Mammary epithelial cell (primary cell): ENCODE measurements at regions of chr2 and their contacts with region 1.

Region 1: DNA sequence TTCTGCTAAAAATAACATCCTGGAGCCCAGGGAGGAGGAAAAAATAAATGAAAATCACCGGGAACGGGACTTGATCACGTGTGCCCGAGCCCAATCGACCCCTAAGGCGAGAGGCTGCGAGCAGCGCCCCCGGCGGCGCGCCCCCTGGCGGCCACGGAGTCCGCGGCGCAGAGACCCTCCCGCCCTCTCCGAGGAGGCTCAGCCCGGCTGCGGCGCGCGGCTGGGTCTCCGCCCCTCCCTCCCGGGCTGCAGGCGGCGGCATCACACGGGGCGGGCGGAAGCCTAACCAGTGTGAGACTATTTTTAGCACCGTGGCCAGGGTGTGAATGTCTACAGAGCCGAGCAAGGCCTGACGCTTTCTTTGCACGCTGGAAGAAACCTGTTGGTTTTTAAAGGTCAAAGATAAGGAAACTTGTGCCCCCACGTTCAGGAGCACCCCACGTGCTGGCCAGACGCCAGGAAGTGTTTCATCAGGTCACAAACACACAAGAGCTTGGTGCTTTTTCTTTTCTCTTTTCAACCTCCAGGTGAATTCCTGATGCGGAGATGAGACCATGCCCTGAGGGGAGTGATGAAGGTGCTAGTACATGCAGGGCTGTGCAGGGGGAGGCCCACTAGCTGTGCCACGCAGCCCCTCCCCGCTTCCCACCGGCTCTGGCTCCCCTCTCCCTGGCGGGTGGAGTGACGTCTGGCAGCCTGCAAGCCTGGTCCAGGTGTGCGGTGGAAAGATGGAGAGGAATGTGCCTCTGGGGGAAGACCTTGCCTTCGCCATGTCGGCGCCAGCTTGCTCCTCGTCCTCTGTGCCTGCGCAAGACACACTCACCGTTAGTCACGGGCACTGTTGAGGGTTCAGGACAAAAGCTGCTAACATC is 35.3 kb upstream of the DNMT3A start:
- DNase-seq: peak; percentile 86
- H3K4me3 ChIP-seq: peak overlapping the region in 2 of 3 experiments; percentile 29 to 38
- H3K27ac ChIP-seq: peak overlapping the region; percentile 49
- H3K4me1 ChIP-seq: peaks cover 38% of the 10 kb centered on the region
- H3K27me3 ChIP-seq: no peaks in the 10 kb centered on the region
- CTCF ChIP-seq: peak; percentile 65 to 73

Region 2: GRCh38 chr2:25342372-25343186 is 34.4 kb before region 1 on chr2:
- CTCF ChIA-PET with region 1: no interaction called
- dilution Hi-C with region 1: no loop called
- in situ Hi-C with region 1: no loop called
- intact Hi-C with region 1: loop called (anchors 1 kb)
- DNase-seq: peak; percentile 65
- H3K4me3 ChIP-seq: peak overlapping the region; percentile 61 to 62 (median 62)
- H3K27ac ChIP-seq: no peak overlapping the region
- H3K4me1 ChIP-seq: peaks cover 15% of the 10 kb centered on the region
- H3K27me3 ChIP-seq: no peaks in the 10 kb centered on the region
- CTCF ChIP-seq: peak; percentile 71 to 92

Region 3: GRCh38 chr2:25362049-25362433 is 14.9 kb before region 1 on chr2:
- CTCF ChIA-PET with region 1: interaction called, 10 read pairs
- dilution Hi-C with region 1: no loop called
- in situ Hi-C with region 1: no loop called
- intact Hi-C with region 1: loop called (anchors 1 kb)
- DNase-seq: peak; percentile 77
- H3K4me3 ChIP-seq: peak overlapping the region; percentile 11 to 38 (median 15)
- H3K27ac ChIP-seq: no peak overlapping the region
- H3K4me1 ChIP-seq: peaks cover 18% of the 10 kb centered on the region
- H3K27me3 ChIP-seq: no peaks in the 10 kb centered on the region
- CTCF ChIP-seq: peak; percentile 90 to 91

Region 4: DNA sequence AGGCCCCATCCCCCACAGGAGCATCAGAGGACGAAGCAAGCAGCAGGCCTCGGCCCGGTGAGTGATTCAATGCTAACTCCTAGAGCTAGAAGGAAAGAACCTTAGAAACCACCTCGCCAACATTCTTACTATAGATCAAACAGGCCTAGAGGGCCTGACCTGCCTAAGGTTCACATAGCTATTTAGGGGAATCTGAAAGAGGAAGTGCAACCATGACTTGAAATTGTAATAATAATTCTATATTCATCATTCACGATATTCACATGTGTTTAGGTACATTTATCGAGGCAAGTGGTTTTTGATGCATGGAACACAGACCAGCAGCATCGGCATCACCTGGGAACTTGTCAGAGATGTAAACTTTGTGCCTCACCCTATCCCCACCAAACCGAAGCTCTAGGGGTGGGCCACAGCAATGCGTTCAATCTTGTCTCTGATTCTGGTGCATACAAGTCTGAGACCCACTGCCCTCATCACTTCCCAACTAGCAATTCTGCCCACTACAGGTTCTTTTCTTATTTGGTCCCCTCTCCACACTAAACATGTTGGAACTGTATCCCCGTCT is 42.8 kb after region 1 on chr2:
- CTCF ChIA-PET with region 1: no interaction called
- dilution Hi-C with region 1: loop called (anchors 5 kb)
- in situ Hi-C with region 1: no loop called
- intact Hi-C with region 1: no loop called
- DNase-seq: no peak
- H3K4me3 ChIP-seq: no peak overlapping the region
- H3K27ac ChIP-seq: no peak overlapping the region
- H3K4me1 ChIP-seq: no peaks in the 10 kb centered on the region
- H3K27me3 ChIP-seq: no peaks in the 10 kb centered on the region
- CTCF ChIP-seq: no peak

Region 5: GRCh38 chr2:25479761-25480160 is 102.8 kb after region 1 on chr2:
- CTCF ChIA-PET with region 1: no interaction called
- dilution Hi-C with region 1: loop called (anchors 5 kb)
- in situ Hi-C with region 1: no loop called
- intact Hi-C with region 1: no loop called
- DNase-seq: peak; percentile 9
- H3K4me3 ChIP-seq: no peak overlapping the region
- H3K27ac ChIP-seq: no peak overlapping the region
- H3K4me1 ChIP-seq: peaks cover 22% of the 10 kb centered on the region
- H3K27me3 ChIP-seq: no peaks in the 10 kb centered on the region
- CTCF ChIP-seq: no peak

Region 6: DNA sequence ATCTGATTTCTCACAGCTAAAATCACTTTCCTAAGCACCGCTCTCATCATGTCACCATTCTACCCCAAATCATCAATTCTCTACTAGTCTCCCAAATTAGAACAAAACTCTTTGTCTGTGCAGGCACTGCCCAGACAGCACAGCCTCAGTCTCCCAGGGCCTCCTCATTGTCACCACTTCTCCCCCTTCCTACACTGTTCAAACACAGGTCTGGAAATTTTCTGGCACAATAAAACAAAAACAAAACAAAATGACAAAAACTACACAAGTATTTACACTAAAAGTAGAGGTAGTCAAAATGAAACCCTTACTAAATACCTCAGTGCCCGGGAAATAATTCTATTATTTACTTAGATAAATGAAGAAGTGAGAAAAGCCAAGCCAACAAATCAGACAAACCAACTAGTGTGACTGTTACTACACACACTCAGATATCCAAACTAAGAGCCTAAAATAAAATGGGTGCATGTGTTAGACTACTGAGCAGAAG is 121.0 kb after region 1 on chr2:
- CTCF ChIA-PET with region 1: no interaction called
- dilution Hi-C with region 1: no loop called
- in situ Hi-C with region 1: no loop called
- intact Hi-C with region 1: no loop called
- DNase-seq: no peak
- H3K4me3 ChIP-seq: no peak overlapping the region
- H3K27ac ChIP-seq: no peak overlapping the region
- H3K4me1 ChIP-seq: no peaks in the 10 kb centered on the region
- H3K27me3 ChIP-seq: no peaks in the 10 kb centered on the region
- CTCF ChIP-seq: no peak

Region 7: DNA sequence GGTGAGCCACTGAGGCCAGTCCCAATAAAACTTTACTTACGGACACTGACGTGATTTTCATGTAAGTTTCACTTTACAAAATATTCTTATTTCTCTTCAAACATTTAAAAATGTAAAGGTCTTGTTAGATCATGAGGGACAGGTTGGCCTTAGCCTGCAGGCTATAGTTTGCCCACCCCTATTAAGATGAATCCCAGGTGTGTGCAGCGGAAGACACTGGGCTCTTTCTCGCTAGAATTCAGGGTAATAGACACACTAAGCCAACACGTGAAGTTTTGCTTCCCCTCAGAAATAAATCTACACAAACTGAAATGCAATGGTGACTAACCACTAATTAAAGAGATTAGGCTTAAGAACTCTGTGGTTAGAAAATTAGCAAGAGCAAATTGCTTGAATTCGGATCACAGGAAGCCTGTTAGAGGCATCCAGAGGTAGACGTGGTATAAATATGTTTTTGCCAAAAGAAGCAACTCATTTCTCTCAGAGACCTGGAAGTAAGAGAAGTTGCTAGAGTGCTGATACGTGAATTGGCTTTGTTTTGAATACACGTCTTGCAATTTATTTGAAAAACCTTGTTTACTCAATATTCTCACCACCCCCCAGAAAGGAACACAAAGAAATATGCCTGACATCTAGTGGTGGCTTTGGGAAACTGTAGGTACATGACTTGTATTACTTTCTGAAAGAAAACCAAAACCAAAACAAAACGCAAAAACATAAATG is 144.8 kb after region 1 on chr2:
- CTCF ChIA-PET with region 1: no interaction called
- dilution Hi-C with region 1: no loop called
- in situ Hi-C with region 1: no loop called
- intact Hi-C with region 1: loop called (anchors 1 kb)
- DNase-seq: peak; percentile 49
- H3K4me3 ChIP-seq: no peak overlapping the region
- H3K27ac ChIP-seq: no peak overlapping the region
- H3K4me1 ChIP-seq: no peaks in the 10 kb centered on the region
- H3K27me3 ChIP-seq: no peaks in the 10 kb centered on the region
- CTCF ChIP-seq: peak; percentile 81 to 86